Activated T-helper 1 cell treated with anti-CD3 and anti-CD28 coated beads, Interleukin-12 subunit alpha, Interleukin-12 subunit beta, Interleukin-2, Interleukin-4 antibody, amounts not matched to agents 30 ng/mL and 10 ng/mL and 1 ng/mL, durations not matched to agents 14 hours and 24 hours and 36 hours (primary cell): ENCODE measurements at regions of chr10 and their contacts with region 1.

Region 1: GRCh38 chr10:95246579-95247051 is 44.2 kb downstream of the PDLIM1 start:
- DNase-seq: peak; percentile 37
- H3K4me3 Mint-ChIP-seq: no peak overlapping the region
- H3K27ac Mint-ChIP-seq: no peak overlapping the region
- H3K4me1 Mint-ChIP-seq: peaks cover 33% of the 10 kb centered on the region
- H3K27me3 Mint-ChIP-seq: no peaks in the 10 kb centered on the region

Region 2: DNA sequence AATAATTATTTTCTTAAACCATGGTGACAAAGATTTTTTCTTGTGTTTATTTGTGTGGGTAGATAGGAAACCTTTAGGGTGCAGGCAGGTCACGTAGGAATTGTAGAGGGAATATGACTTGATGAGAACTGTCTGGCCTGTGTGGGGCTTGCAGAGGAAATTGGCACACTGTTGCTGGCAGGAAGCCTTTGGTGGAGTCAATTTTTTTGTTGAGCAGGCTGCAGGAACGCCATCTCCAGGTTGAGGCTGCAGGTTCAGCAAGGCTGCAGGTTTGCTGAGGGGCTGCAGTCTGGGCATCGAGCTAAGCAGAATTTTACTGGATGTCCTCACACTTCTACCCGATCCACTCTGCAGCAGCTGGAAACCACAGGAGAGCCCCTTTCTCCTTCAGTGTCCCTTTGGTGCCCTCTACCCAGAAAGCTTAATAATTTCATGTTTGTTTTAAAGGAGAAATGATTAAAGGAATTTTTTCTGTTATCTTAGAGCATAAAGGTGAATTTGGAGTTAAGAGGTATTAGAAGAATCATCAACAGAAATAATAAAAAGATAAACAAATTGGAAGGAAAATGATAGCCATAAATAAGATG is 807.2 kb before region 1 on chr10:
- intact Hi-C with region 1: no loop called
- DNase-seq: no peak
- H3K4me3 Mint-ChIP-seq: no peak overlapping the region
- H3K27ac Mint-ChIP-seq: no peak overlapping the region
- H3K4me1 Mint-ChIP-seq: no peaks in the 10 kb centered on the region
- H3K27me3 Mint-ChIP-seq: no peaks in the 10 kb centered on the region

Region 3: GRCh38 chr10:94630017-94630688 is 616.5 kb before region 1 on chr10:
- intact Hi-C with region 1: loop called (anchors 1 kb)
- DNase-seq: no peak
- H3K4me3 Mint-ChIP-seq: no peak overlapping the region
- H3K27ac Mint-ChIP-seq: no peak overlapping the region
- H3K4me1 Mint-ChIP-seq: no peaks in the 10 kb centered on the region
- H3K27me3 Mint-ChIP-seq: no peaks in the 10 kb centered on the region

Region 4: GRCh38 chr10:95133016-95133752 is 113.4 kb before region 1 on chr10:
- intact Hi-C with region 1: loop called (anchors 1 kb)
- DNase-seq: peak; percentile 60
- H3K4me3 Mint-ChIP-seq: no peak overlapping the region
- H3K27ac Mint-ChIP-seq: no peak overlapping the region
- H3K4me1 Mint-ChIP-seq: no peaks in the 10 kb centered on the region
- H3K27me3 Mint-ChIP-seq: peaks cover 4% of the 10 kb centered on the region

Region 5: GRCh38 chr10:95208702-95209391 is 37.8 kb before region 1 on chr10:
- intact Hi-C with region 1: loop called (anchors 1 kb)
- DNase-seq: no peak
- H3K4me3 Mint-ChIP-seq: no peak overlapping the region
- H3K27ac Mint-ChIP-seq: no peak overlapping the region
- H3K4me1 Mint-ChIP-seq: no peaks in the 10 kb centered on the region
- H3K27me3 Mint-ChIP-seq: no peaks in the 10 kb centered on the region

Region 6: DNA sequence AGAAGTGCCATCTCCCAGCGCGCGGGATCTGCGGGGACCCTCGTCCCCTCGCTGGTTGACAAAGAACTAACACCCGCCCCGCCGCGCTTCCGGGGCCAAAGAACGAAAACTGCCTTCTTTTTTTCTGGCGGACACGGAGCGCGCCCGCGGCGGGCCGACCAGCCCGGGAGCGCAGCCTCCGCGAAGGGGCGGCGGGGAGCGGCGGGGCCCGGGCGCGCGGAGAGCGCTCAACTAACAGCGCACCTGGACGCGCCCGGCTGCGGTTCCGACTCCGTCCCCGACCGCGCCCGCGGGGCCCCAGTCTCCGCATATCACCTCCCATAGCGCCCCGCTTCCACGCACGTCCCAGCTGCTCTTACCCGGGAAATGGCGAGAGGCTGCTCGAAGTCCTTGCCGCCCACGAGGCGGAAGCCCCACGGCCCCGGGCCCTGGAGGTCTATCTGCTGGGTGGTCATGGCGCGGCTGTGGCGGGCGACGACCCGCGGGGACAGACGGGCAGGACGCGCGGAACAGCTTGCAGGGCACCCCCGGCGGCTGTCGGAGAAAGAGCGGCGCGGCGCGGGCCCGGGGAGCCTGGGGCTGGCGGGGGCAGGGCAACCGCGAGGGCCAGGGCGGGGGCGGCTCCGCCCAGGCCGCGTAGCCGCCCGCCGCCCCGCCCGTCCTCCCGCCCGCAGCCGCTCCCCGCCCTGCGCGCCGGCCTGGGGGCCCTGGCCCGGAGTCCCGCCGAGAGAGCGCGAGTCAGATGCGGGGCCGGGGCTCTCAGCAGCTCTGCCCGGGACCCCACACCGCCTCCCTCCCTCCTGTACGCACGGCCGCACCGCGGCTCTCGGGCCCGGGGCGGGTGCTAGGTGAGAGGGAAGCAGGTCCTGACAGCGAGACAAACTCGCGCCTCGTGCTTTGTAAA is 44.1 kb after region 1 on chr10 and contains the start of gene PDLIM1:
- intact Hi-C with region 1: loop called (anchors 5 kb)
- DNase-seq: peak; percentile 51
- H3K4me3 Mint-ChIP-seq: peak within 1 kb of the TSS; percentile 81
- H3K27ac Mint-ChIP-seq: peak within 1 kb of the TSS; percentile 51
- H3K4me1 Mint-ChIP-seq: peaks cover 32% of the 10 kb centered on the region
- H3K27me3 Mint-ChIP-seq: peaks cover 43% of the 10 kb centered on the region
- total RNA-seq, gene PDLIM1: 2.6 and 2.9 TPM in 2 replicates

Region 7: DNA sequence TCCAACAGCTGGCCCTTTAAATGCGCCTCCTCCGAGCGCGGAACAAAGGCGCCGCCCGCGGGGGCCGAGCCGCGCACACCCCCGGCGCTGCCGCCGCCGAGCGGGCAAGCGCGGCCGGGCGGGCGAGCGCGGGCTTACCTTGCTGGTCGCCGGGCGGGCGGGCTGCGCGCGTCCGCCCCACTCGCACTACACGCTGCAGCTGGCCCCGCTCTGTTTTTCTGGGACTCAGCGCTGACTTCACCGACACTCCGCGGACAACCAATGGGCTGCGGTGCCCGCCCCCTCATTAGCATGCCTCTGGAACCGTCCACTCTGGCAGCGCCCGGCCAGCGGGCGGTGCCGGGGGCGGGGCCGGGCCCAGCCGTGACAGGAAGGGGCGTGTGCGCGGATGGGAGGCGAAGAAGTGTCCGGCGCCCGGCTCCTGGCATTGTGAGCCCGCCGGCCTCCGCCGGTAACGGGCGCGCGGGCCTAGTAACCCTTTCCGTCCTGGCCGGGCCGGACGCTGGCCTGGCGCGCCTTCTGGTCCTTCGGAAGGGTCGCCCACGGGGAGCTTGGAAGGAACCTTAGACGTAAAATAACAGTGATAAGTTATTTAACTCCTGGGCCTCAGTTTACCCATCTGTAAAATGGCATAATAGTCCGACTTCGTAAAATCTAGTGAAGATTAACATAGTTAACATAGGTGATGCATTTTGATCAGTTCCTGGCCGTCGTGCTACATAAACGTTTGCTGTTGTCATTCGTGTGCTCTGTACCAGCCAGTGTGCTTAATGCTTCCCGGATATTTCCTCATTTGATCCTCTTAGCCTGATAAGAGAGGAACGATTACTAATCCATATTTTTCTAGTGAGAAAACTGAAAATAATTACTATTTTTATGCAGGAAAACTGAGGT is 314.8 kb after region 1 on chr10 and contains the start of gene SORBS1:
- intact Hi-C with region 1: loop called (anchors 10 kb)
- DNase-seq: peak; percentile 90
- H3K4me3 Mint-ChIP-seq: peak within 1 kb of the TSS; percentile 94
- H3K27ac Mint-ChIP-seq: peak within 1 kb of the TSS; percentile 77
- H3K4me1 Mint-ChIP-seq: peaks cover 15% of the 10 kb centered on the region
- H3K27me3 Mint-ChIP-seq: peaks cover 39% of the 10 kb centered on the region
- total RNA-seq, gene SORBS1: 0.59 and 0.73 TPM in 2 replicates